ENCODE measurements at regions of chr3 and their contacts with region 1.

Region 1: GRCh38 chr3:141452036-141452435 is 34.8 kb upstream of the RASA2 start:
- DNase-seq: no peak
- ATAC-seq: peak; percentile 57 to 76
- H3K4me3 ChIP-seq: no peak overlapping the region
- H3K27ac ChIP-seq: no peak overlapping the region
- H3K4me1 ChIP-seq: peaks cover 24% of the 10 kb centered on the region
- H3K27me3 ChIP-seq: no peaks in the 10 kb centered on the region
- CTCF ChIP-seq: peak; percentile 64

Region 2: GRCh38 chr3:141353652-141354495 is 98.2 kb before region 1 on chr3:
- intact Hi-C with region 1: loop called (anchors 10 kb)
- DNase-seq: no peak
- ATAC-seq: no peak
- H3K4me3 ChIP-seq: no peak overlapping the region
- H3K27ac ChIP-seq: no peak overlapping the region
- H3K4me1 ChIP-seq: no peaks in the 10 kb centered on the region
- H3K27me3 ChIP-seq: no peaks in the 10 kb centered on the region
- CTCF ChIP-seq: no peak

Region 3: DNA sequence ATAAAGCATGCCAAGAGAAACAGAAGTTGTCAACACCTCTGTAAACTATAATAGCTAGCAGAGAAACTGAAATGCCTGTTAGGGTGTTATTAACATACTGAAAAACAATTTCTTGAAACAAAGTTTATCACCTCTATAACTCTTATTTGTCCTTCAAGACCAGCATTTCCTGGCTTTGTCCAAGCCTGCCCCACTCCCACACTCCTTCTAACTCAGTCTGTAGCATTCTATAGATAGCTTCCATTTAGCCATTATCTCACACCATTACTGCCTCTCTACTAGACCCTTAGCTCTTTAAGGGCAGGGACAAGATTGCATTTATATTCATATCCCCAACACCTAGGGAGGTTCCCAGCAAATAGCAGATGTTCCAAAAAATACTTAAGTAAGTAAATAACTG is 736.8 kb after region 1 on chr3:
- intact Hi-C with region 1: no loop called
- DNase-seq: no peak
- ATAC-seq: no peak
- H3K4me3 ChIP-seq: no peak overlapping the region
- H3K27ac ChIP-seq: no peak overlapping the region
- H3K4me1 ChIP-seq: no peaks in the 10 kb centered on the region
- H3K27me3 ChIP-seq: no peaks in the 10 kb centered on the region
- CTCF ChIP-seq: no peak

Measured in lower lobe of right lung (tissue), 2 donors.